Left lung (tissue), 14 donors: ENCODE measurements at regions of chr17 and their contacts with region 1.

Region 1: DNA sequence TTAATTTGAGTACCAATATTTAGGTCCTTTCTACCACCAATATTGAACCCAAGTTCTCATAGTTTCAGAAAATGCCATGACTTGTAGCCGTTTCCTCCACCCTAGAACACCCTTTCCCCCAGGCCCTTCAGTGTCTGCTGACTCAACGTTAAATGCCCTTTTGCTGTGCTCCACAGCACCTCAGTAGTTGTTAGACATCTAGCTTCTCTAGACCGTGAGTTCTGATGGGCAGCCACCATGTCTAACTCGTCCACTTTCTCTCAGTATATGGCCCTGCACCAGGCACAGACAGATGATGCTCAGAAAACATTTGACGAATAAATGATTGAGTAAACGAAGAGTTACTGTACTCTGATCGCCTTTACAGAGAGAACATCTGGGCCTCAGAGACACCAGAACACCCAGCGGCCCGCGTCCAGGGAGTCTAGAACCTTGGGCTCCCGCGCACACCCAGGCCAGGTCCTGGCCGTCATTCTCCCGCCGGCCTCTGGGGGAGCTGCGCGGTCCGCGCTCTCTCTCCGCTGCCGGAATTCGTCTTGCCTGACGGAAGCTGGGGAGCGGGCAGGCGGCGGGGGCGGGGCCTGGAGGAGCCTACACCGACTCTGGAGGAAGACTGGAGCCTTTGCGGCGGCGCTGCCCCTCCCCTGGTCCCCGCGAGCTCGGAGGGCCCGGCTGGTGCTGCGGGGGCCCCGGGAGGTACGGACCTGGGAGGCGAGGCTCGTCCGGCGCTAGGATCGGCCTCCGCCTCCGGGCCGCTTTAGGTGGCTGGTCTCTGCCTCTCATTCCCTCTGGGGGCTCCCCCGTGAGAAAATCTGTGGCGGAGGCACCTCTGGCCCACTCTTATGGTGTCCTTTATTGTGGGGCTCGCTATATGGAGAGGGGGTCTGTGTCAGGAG is at the start of gene NKIRAS2:
- DNase-seq: peak; percentile 81 to 100 (median 94)
- ATAC-seq: peak; percentile 82
- H3K4me3 ChIP-seq: peak within 1 kb of the TSS; percentile 80 to 89
- H3K27ac ChIP-seq: peak within 1 kb of the TSS; percentile 67 to 84
- H3K4me1 ChIP-seq: peaks cover 34 to 72% of the 10 kb centered on the region in 2 donors
- H3K27me3 ChIP-seq: no peaks in the 10 kb centered on the region
- CTCF ChIP-seq: peak; percentile 94 to 98
- polyA plus RNA-seq, gene NKIRAS2: 43.0 to 50.1 (median 46.9) TPM

Region 2: DNA sequence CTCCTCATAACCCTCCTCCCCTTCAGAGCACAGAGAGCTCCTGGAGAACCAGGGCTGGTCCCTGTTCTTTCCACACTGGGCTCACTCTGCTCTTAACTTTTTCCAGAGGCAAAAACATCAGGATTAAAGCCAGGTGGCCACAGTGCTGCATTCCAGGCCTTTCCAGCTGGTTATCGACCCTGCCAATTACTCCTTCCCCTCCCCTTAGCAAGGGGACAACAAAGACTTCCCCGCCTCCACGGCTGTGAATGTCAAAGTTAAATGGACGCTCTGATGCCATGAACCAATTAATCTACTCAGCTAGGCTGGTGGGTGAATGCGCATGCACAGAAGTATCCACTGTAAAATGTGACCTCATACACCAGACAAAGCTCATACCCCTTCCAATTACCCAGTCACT is 124.1 kb before region 1 on chr17:
- intact Hi-C with region 1: no loop called
- DNase-seq: peak in 2 of 4 donors; percentile 34 to 46
- ATAC-seq: peak; percentile 22
- H3K4me3 ChIP-seq: no peak overlapping the region
- H3K27ac ChIP-seq: no peak overlapping the region
- H3K4me1 ChIP-seq: no peaks in the 10 kb centered on the region
- H3K27me3 ChIP-seq: no peaks in the 10 kb centered on the region
- CTCF ChIP-seq: no peak

Region 3: DNA sequence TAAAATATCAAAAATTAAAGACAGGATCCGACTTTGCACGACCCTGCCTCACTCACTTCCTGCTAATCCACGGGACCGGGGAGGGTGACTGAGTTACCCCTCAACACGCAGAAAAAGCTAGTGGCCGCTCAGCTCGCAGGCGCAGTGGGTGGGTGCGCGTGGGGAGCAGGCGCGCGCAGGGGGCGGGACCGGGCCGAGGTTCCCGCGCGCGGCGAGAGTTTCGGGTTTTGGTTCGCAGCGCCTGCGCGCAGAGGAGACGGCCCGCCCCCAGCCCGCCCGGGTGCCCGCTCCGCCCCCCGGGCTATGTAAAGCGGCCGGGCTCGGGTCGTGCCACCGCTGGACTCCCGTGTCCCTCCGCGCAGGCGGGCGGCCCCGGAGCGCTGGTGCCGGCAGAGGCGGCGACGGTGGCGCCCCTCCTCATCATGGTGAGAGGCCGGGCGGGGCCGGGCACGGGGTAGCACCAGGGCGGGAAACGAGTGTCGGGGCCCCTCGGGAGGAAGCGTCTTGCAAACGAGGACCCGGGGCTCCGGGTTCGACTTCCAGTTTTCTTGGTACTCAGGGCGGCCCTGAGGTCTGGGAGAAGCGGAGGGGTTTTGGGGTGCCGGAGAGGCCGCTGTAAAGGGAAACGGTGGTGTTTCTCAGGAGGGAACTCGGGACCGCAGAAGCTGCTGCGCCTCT is 53.2 kb before region 1 on chr17 and contains the start of gene CNP:
- intact Hi-C with region 1: loop called in 1 of 2 experiments (anchors 10 kb)
- DNase-seq: peak; percentile 88 to 97 (median 93)
- ATAC-seq: peak; percentile 93
- H3K4me3 ChIP-seq: peak within 1 kb of the TSS; percentile 63 to 83
- H3K27ac ChIP-seq: peak within 1 kb of the TSS; percentile 80 to 81
- H3K4me1 ChIP-seq: peaks cover 3 to 52% of the 10 kb centered on the region in 2 donors
- H3K27me3 ChIP-seq: no peaks in the 10 kb centered on the region
- CTCF ChIP-seq: peak in 1 of 2 donors; percentile 17
- polyA plus RNA-seq, gene CNP: 53.4 to 75.4 (median 62.6) TPM

Region 4: GRCh38 chr17:42055496-42055895 is 35.7 kb after region 1 on chr17:
- intact Hi-C with region 1: no loop called
- DNase-seq: no peak
- ATAC-seq: no peak
- H3K4me3 ChIP-seq: no peak overlapping the region
- H3K27ac ChIP-seq: no peak overlapping the region
- H3K4me1 ChIP-seq: peaks cover 0 to 13% of the 10 kb centered on the region in 2 donors
- H3K27me3 ChIP-seq: peaks cover 0 to 33% of the 10 kb centered on the region in 2 donors
- CTCF ChIP-seq: no peak

Region 5: GRCh38 chr17:42087736-42088705 is 68.3 kb after region 1 on chr17:
- intact Hi-C with region 1: no loop called
- DNase-seq: no peak
- ATAC-seq: no peak
- H3K4me3 ChIP-seq: no peak overlapping the region
- H3K27ac ChIP-seq: no peak overlapping the region
- H3K4me1 ChIP-seq: no peaks in the 10 kb centered on the region
- H3K27me3 ChIP-seq: peaks cover 0 to 16% of the 10 kb centered on the region in 2 donors
- CTCF ChIP-seq: no peak

Region 6: DNA sequence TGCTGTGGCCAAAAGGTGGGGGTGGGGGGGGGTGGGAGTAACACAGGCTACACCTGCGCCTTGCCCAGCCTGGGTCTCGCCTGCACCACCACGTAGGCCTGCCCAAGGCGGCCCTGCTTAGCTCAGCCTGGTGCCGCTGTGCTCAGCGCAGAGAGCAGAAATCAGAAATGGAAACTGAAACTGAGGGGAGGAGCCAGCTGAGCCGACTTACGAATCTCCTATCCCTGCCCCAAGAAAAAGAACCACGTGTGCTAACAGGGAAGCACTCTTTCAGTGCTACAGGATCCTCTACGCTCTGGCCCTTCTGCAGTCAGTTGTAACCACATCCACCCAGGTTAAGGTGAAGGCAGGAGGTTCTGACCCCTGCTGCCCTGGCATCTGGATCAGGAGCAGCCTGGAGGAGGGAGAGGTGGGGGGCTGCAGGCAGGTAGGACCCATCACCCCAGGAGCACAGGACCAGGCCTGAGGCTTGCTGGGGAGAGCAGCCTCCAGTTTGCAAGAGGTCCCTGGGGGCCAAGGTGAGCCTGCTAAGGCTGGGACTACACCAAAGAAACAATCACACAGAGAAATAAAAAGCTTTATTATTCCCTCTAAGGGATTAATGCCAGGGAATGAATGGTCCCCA is 92.9 kb after region 1 on chr17 and contains the start of gene DHX58:
- intact Hi-C with region 1: loop called in 1 of 2 experiments (anchors 10 kb)
- DNase-seq: peak; percentile 70 to 87 (median 84)
- ATAC-seq: peak; percentile 90
- H3K4me3 ChIP-seq: peak within 1 kb of the TSS; percentile 39 to 55
- H3K27ac ChIP-seq: peak within 1 kb of the TSS; percentile 90 to 91
- H3K4me1 ChIP-seq: peaks cover 13 to 32% of the 10 kb centered on the region in 2 donors
- H3K27me3 ChIP-seq: no peaks in the 10 kb centered on the region
- CTCF ChIP-seq: no peak
- polyA plus RNA-seq, gene DHX58: 15.4 to 22.4 (median 18.5) TPM